IMR-90 (cell line): ENCODE measurements at regions of chr6 and their contacts with region 1.

Region 1: DNA sequence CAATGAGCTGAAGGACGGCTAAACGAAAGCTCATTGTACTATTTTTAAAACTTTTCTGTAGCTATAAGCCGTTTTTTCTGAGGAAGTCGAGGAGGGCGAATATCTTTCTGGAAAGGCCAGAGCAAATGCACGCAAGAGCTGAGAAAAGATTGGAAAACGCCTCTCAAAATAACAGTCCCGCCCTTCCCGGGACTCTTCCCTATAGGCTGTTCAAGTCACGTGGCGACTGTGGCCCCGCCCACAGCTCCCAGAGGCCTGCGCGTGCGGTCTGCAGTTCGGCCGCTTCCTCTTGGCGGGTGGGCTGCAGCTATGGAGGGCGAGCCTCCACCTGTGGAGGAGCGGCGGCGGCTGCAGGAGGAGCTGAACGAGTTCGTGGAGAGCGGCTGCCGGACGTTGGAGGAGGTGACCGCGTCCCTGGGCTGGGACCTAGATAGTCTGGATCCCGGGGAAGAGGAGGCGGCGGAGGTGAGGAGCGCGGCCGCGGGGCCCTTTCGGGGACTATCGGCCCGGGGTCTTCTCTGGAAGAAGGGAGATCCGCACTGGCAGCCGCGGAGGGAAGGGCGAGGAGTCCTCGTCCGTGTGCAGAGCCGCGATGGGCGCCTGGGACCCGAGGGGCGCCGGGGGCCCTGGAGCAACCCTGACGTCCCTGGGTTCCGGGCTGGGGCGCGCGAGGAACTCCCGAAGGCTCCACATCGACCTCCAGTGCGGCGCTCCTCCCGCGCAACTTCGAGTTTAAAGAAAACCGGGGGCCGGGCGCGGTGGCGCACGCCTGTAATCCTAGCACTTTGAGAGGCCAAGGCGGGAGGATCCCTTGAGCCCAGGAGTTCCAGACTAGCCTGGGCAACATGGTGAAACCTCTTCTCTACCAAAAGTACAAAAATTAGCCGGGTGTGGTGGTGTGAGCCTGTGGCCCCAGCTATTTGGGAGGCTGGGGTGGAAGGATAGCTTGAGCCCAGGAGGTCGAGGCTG is at the start of gene SNRNP48:
- DNase-seq: peak; percentile 91
- ATAC-seq: peak; percentile 99
- H3K4me3 ChIP-seq: peak within 1 kb of the TSS; percentile 98
- H3K27ac ChIP-seq: peak within 1 kb of the TSS; percentile 94
- H3K4me1 ChIP-seq: peaks cover 8% of the 10 kb centered on the region
- H3K27me3 ChIP-seq: no peaks in the 10 kb centered on the region
- CTCF ChIP-seq: no peak
- POLR2A ChIP-seq: no peak
- RAD21 ChIP-seq: no peak
- total RNA-seq, gene SNRNP48: 5.2 and 9.4 TPM in 2 replicates

Region 2: GRCh38 chr6:7238900-7239589 is 351.2 kb before region 1 on chr6:
- CTCF ChIA-PET with region 1: no interaction called
- POLR2A ChIA-PET with region 1: no interaction called
- dilution Hi-C with region 1: no loop called
- in situ Hi-C with region 1: no loop called
- intact Hi-C with region 1: no loop called
- DNase-seq: peak; percentile 67
- ATAC-seq: peak; percentile 51
- H3K4me3 ChIP-seq: no peak overlapping the region
- H3K27ac ChIP-seq: no peak overlapping the region
- H3K4me1 ChIP-seq: peaks cover 13% of the 10 kb centered on the region
- H3K27me3 ChIP-seq: no peaks in the 10 kb centered on the region
- CTCF ChIP-seq: peak; percentile 64
- POLR2A ChIP-seq: no peak
- RAD21 ChIP-seq: peak; percentile 65

Region 3: GRCh38 chr6:7300926-7301325 is 289.3 kb before region 1 on chr6:
- CTCF ChIA-PET with region 1: interaction called, 4 read pairs
- POLR2A ChIA-PET with region 1: no interaction called
- dilution Hi-C with region 1: no loop called
- in situ Hi-C with region 1: loop called (anchors 10 kb)
- intact Hi-C with region 1: no loop called
- DNase-seq: no peak
- ATAC-seq: no peak
- H3K4me3 ChIP-seq: no peak overlapping the region
- H3K27ac ChIP-seq: no peak overlapping the region
- H3K4me1 ChIP-seq: no peaks in the 10 kb centered on the region
- H3K27me3 ChIP-seq: no peaks in the 10 kb centered on the region
- CTCF ChIP-seq: no peak
- POLR2A ChIP-seq: no peak
- RAD21 ChIP-seq: no peak

Region 4: DNA sequence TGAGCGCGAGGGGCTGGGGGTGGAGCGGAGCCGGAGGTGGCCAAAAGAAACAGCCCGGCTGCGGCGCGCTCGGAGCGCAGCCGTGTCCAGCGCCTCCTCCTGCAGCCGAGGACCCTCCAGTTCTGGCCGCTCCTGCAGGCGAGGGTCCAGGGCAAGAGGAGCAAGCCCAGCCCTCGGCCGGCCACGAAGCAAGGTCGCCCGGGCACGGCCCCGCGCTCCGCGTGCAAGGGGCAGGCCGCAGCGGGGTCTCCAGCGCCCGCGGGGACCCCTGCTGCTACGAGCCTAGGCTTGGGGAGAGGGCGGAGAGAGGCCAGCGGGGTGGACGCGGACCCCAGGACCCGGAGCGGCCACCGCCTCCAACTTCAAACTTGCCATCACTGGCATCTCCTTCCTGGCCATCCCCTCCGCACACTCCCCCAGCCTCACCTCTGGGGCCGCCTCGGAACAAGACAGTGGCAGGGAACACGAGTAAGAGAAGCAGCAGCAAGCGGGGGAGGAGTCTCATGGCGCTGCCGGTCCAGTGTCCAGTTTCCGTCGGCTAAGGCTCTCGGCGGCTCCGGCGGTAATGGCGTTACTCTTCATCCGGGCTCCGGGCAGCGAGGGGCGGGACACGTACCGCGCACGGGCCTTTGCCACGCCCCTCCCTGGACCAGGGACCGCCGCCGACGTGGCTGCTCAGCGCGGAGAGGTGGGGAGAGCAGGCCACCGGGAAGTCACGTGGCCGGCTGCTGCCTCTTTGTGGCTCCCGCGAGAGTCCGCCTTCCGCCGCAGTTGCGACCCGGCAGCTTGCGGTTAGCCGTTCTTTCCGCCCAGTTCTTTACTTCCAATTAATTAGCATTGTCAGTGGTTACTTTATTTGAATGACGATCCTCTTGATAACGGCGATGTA is 277.4 kb before region 1 on chr6 and contains the start of gene SSR1:
- CTCF ChIA-PET with region 1: no interaction called
- POLR2A ChIA-PET with region 1: no interaction called
- dilution Hi-C with region 1: no loop called
- in situ Hi-C with region 1: loop called (anchors 10 kb)
- intact Hi-C with region 1: loop called (anchors 5 kb)
- DNase-seq: peak; percentile 95
- ATAC-seq: peak; percentile 99
- H3K4me3 ChIP-seq: peak within 1 kb of the TSS; percentile 84
- H3K27ac ChIP-seq: peak within 1 kb of the TSS; percentile 95
- H3K4me1 ChIP-seq: peaks cover 3% of the 10 kb centered on the region
- H3K27me3 ChIP-seq: no peaks in the 10 kb centered on the region
- CTCF ChIP-seq: no peak
- POLR2A ChIP-seq: peak; percentile 83
- RAD21 ChIP-seq: peak; percentile 11; the same call in 1 of the 2 replicates
- total RNA-seq, gene SSR1: 120 and 213 TPM in 2 replicates

Region 5: GRCh38 chr6:7324520-7324919 is 265.7 kb before region 1 on chr6:
- CTCF ChIA-PET with region 1: no interaction called
- POLR2A ChIA-PET with region 1: no interaction called
- dilution Hi-C with region 1: no loop called
- in situ Hi-C with region 1: no loop called
- intact Hi-C with region 1: no loop called
- DNase-seq: no peak
- ATAC-seq: no peak
- H3K4me3 ChIP-seq: no peak overlapping the region
- H3K27ac ChIP-seq: no peak overlapping the region
- H3K4me1 ChIP-seq: no peaks in the 10 kb centered on the region
- H3K27me3 ChIP-seq: no peaks in the 10 kb centered on the region
- CTCF ChIP-seq: no peak
- POLR2A ChIP-seq: no peak
- RAD21 ChIP-seq: no peak

Region 6: DNA sequence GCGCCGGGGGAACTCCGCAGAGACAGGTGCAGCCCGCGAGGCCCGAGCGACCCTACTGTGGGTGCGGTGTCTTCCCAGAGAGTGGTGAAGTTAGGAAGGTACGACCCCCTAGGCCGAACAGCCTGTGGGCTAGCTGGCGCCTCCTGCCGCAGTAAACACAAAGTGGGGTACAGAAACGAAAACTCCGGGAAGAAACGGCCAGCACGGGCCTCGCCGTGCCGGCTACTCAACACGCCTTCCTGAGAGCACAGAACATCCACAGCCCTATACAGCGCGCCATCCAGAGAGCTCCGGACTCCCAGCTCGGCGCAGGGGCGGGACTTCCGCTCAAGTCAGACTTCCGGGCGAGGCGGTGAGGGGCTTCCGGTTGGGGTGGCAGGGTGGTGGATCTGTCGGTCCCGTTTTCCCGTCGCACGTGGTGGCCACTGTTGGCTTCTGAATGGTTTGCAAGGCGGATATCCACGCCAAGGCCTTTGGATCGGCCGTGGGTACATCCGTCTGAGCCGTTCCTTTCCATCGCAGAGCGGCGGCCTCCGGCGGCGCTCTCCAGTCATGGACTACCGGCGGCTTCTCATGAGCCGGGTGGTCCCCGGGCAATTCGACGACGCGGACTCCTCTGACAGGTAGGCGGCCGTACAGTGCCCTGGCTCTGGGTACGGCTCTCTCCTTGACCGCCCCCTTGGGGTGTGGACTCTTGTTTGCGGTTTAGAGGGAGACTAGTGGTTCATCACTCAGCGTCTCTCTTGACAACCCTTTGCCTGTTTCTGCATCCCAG is 200.6 kb before region 1 on chr6 and contains the starts of genes CAGE1 and RIOK1:
- CTCF ChIA-PET with region 1: no interaction called
- POLR2A ChIA-PET with region 1: no interaction called
- dilution Hi-C with region 1: no loop called
- in situ Hi-C with region 1: no loop called
- intact Hi-C with region 1: loop called (anchors 2 kb)
- DNase-seq: peak; percentile 93
- ATAC-seq: peak; percentile 96
- H3K4me3 ChIP-seq: peak within 1 kb of the TSS; percentile 67
- H3K27ac ChIP-seq: peak within 1 kb of the TSS; percentile 82
- H3K4me1 ChIP-seq: no peaks in the 10 kb centered on the region
- H3K27me3 ChIP-seq: no peaks in the 10 kb centered on the region
- CTCF ChIP-seq: 0 out of 2 replicates have a peak, but pooled peaks have one; percentile 1
- POLR2A ChIP-seq: peak; percentile 78
- RAD21 ChIP-seq: no peak
- total RNA-seq, gene CAGE1: under 0.01 TPM in 1 of 2 replicates, not detected in the other
- total RNA-seq, gene RIOK1: 17.0 and 27.2 TPM in 2 replicates

Region 7: DNA sequence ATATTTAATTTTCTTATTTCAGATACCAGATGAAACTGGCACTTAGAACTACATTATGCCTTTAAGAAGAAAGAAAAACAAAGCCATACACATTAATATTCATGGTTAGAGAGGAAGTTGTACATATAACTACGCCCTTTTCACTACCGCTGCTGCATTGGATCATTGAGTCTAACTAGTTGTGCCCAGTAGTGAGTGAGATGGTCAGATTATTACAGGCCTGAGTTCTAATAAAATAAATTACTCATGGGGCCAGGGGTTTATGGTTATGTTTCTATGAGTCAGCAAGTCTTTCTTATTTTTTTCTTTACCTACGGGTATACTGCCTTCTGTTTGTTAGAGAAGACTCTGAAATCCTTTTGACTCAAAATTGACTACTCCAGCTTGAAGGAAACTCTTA is 189.2 kb before region 1 on chr6:
- CTCF ChIA-PET with region 1: no interaction called
- POLR2A ChIA-PET with region 1: no interaction called
- dilution Hi-C with region 1: no loop called
- in situ Hi-C with region 1: loop called (anchors 10 kb)
- intact Hi-C with region 1: no loop called
- DNase-seq: peak; percentile 25
- ATAC-seq: no peak
- H3K4me3 ChIP-seq: no peak overlapping the region
- H3K27ac ChIP-seq: no peak overlapping the region
- H3K4me1 ChIP-seq: no peaks in the 10 kb centered on the region
- H3K27me3 ChIP-seq: no peaks in the 10 kb centered on the region
- CTCF ChIP-seq: no peak
- POLR2A ChIP-seq: no peak
- RAD21 ChIP-seq: no peak

Region 8: DNA sequence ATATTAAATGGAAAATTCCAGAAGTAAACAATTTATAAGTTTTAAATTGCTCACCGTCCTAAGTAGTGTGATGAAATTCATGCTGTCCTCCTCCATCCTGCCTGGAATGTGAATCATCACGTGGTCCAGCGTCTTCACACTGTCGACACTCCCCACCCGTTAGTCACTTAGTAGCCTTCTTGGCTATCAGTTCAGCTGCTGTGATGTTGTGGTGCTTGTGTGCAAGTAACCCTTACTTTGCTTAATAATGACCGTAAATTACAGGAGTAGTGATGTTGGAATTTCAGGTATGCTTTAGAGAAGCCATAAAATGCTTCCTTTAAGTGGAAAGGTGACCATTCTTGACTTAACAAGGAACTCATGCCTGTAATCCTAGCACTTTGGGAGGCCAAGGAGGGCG is 175.4 kb before region 1 on chr6:
- CTCF ChIA-PET with region 1: no interaction called
- POLR2A ChIA-PET with region 1: interaction called, 3 read pairs
- dilution Hi-C with region 1: no loop called
- in situ Hi-C with region 1: no loop called
- intact Hi-C with region 1: loop called (anchors 2 kb)
- DNase-seq: peak; percentile 94
- ATAC-seq: peak; percentile 89
- H3K4me3 ChIP-seq: no peak overlapping the region
- H3K27ac ChIP-seq: peak overlapping the region; percentile 34; the same call in 1 of the 2 replicates
- H3K4me1 ChIP-seq: peaks cover 11% of the 10 kb centered on the region
- H3K27me3 ChIP-seq: no peaks in the 10 kb centered on the region
- CTCF ChIP-seq: no peak
- POLR2A ChIP-seq: no peak
- RAD21 ChIP-seq: no peak